ENCODE measurements at regions of chr10 and their contacts with region 1.

Region 1: GRCh38 chr10:104209575-104210198 is 22.5 kb downstream of the CFAP43 start:
- DNase-seq: peak in 41 of 42 donors; percentile 22 to 87 (median 66)

Region 2: GRCh38 chr10:103895411-103896186 is 314.1 kb before region 1 on chr10:
- intact Hi-C with region 1: loop called (anchors 10 kb)
- DNase-seq: no peak

Region 3: DNA sequence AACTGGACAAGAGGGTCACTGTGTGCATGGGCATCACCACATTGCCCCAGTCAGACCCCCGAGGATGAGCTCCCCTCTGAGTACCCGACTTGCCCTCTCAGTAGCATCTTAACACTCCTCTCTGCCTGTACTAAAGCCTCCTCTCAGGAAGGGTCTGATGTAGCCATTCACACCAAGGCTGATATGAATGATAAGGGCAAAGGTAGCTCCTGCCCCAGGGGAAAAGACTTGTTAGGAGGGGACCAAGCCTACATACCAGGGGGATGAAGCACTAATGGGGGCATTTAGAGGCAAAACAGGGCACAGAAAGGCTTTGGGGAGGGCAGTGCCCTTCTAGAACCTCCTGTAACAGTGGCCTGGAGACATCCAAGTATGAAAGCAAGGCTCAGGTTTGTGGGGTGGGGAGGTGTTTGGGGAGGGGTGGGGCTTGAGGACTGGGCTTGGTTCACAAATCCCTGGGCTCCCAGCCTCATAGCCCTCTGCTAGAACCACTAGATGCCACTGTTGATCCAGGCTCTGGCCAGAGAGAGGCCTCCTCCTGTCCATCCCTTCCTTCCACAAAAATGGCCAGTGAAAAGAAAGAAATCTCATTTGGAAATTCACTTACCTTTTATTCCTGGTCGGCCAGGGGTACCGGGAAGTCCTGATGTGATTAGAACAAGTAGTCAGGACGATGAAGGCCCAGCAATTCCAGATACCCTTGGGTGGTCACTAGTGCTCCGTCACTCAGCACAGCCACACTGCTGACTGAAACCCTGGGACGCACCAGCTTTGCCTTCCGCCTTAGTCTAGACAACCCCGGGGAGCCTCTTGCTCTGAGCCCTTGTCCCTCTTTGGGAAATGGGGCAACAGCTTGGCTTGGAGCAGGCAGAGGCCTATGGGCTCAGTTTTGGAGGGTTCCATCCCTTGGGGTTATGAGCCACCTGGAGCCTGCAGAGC is 164.3 kb before region 1 on chr10:
- intact Hi-C with region 1: loop called (anchors 5 kb)
- DNase-seq: peak; percentile 23 to 89 (median 74)

Region 4: GRCh38 chr10:104197364-104197763 is 12.3 kb before region 1 on chr10:
- intact Hi-C with region 1: no loop called
- DNase-seq: no peak

Region 5: DNA sequence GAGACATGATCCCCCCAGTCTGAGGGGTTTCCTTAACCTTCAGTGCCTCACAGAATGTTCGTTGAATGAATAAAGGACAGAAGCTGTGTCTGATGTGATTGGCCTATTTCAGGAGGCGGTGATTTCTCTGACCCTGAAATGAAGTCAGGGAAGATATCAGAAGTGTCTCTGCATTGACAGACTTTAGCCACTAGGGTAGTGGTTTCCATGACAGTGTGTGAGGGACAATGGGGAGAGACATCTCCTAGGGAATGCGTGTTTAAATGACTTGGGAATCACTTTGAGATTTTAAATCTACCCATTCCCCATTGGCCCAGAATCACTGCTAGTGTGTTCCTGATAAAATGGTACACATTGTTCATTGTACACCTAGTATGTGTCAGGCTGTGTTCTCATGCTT is 275.9 kb after region 1 on chr10:
- intact Hi-C with region 1: no loop called
- DNase-seq: no peak

Measured in head of caudate nucleus (tissue), 42 donors.